Activated CD8-positive, alpha-beta memory T cell treated with anti-CD3 and anti-CD28 coated beads, Interleukin-2, amount 10 ng/mL, durations not matched to agents 7 days and 5 days (primary cell): ENCODE measurements at regions of chr12 and their contacts with region 1.

Region 1: GRCh38 chr12:55738123-55739024 is 4.5 kb upstream of the GDF11 start:
- DNase-seq: peak; percentile 93
- ATAC-seq: peak; percentile 75
- H3K4me3 Mint-ChIP-seq: peak overlapping the region; percentile 80
- H3K27ac Mint-ChIP-seq: peak overlapping the region; percentile 88
- H3K4me1 Mint-ChIP-seq: peaks cover 31% of the 10 kb centered on the region
- H3K27me3 Mint-ChIP-seq: peaks cover 8% of the 10 kb centered on the region

Region 2: DNA sequence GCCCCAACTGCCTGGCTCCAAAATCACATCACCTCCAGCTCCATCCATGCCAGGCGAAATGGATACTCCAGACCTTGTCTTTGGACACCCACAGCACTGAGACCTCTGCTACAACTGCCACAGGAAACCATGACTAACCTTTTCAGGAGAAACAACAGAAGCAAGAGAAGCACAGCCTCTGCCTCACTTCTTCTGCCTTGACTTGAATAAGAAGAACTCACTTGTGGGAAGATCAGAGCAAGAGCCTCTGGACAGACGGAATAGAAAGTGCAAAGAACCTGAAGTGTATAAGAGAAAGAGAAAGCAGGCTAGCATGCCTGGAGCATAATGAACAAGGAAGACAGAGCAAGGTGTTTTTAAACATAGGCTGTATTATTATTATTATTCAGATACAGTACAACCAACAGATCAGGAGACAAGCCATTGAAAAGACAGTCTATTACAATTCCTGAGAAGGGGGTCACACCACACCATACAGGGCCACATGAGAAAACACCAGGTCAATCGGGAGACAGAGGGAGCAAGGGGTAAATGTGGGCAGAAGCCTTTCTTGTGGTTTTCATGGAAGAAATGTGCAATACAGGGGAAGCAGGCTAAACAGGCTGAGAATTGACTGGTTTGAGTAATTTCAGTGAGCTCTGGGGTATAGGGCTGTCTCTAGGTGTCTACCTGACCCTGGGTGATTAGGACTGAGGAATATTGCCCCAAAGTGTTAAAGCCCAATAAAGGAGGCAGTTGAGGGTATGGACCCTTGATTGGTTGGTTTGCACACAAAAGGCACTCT is 109.1 kb before region 1 on chr12:
- CTCF ChIA-PET with region 1: no interaction called
- DNase-seq: no peak
- ATAC-seq: peak; percentile 51
- H3K4me3 Mint-ChIP-seq: no peak overlapping the region
- H3K27ac Mint-ChIP-seq: peak overlapping the region; percentile 0
- H3K4me1 Mint-ChIP-seq: peaks cover 17% of the 10 kb centered on the region
- H3K27me3 Mint-ChIP-seq: peaks cover under 1% of the 10 kb centered on the region

Region 3: DNA sequence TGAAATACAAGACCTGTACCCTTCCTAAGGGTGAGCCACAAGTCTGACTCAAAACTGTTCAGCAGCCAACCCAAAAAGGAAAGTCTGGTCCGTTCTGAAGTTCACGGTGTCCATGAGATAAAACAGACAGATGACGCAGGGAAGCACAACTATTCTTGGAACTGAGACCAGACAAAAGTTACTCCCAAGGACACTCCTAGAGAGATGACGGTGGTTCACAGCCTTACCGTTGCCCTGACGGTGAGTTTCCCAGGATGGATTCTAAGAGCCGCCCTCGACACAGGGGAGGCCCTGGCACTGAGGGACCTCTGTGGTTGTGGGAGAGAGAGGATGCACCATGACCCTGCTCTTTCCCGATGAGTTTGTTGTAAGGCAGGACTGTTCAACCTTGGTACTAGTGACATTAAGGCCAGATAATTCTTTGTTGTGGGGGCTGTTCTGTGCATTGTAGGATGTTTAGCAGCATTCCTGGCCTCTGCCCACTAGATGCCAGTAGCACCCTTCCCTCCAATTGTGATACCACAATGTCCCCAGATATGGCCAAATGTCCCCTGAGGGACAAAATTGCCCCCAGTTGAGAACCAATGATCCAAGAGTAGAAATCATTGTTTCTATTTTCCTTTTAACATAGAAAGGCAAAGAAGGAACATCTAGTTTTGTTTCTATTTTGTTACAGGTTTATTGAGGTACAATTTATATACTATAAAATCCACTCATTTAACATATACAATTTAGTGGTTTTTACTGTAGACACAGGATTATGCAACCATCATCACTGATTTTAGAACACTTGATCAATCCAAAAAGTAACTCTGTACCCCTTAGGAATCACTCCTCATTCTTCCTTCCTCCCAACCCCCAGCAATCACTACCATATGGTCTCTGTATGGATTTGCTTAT is 78.6 kb before region 1 on chr12:
- CTCF ChIA-PET with region 1: interaction called, 16 read pairs
- DNase-seq: no peak
- ATAC-seq: no peak
- H3K4me3 Mint-ChIP-seq: no peak overlapping the region
- H3K27ac Mint-ChIP-seq: no peak overlapping the region
- H3K4me1 Mint-ChIP-seq: no peaks in the 10 kb centered on the region
- H3K27me3 Mint-ChIP-seq: peaks cover 19% of the 10 kb centered on the region

Region 4: GRCh38 chr12:55797068-55797467 is 58.7 kb after region 1 on chr12:
- CTCF ChIA-PET with region 1: interaction called, 25 read pairs
- DNase-seq: no peak
- ATAC-seq: no peak
- H3K4me3 Mint-ChIP-seq: no peak overlapping the region
- H3K27ac Mint-ChIP-seq: no peak overlapping the region
- H3K4me1 Mint-ChIP-seq: peaks cover 19% of the 10 kb centered on the region
- H3K27me3 Mint-ChIP-seq: no peaks in the 10 kb centered on the region

Region 5: DNA sequence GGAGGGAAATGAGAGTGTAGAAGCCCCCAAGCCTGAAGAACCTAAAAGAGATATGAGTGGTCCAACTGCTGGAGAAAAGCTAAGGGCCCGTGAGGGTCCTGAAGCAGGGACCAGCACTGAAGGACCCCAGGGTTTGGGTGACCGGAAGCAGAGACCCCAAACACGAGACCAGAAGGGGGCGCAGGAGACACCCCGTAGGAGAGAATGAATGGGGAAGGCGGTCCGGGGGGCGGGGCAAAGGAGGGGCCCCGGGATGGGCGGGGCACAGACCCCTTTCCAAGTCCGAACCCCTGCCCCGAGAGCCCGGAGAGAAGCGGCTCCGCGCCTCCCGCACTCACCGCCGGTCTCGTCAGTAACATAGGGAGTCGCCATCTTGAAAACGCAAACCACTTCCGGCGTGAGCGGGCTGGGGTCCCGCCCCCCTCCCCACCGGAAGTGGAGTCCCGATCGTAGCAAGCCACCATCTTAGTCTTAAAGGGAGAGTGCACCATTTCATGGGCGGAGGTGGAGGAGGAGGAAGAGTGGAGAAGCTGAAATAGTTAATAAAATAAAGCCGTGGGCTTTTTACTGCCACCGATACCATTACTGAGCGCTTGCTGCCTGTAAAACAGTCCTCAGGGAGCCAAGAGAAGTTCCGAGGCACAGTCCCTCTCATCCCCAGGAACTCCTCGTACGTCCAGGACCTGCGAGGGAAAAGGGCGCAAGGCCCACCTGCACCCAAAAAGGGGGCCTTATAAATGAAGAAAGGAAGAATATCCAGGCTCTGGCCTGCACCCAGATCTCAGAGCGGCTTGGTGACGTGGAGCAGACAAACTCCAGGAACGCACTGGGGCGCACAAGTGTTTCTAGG is 188.6 kb after region 1 on chr12:
- CTCF ChIA-PET with region 1: interaction called, 66 read pairs
- DNase-seq: peak; percentile 97
- ATAC-seq: peak; percentile 48
- H3K4me3 Mint-ChIP-seq: peak overlapping the region; percentile 96
- H3K27ac Mint-ChIP-seq: peak overlapping the region; percentile 98
- H3K4me1 Mint-ChIP-seq: peaks cover 44% of the 10 kb centered on the region
- H3K27me3 Mint-ChIP-seq: no peaks in the 10 kb centered on the region

Region 6: GRCh38 chr12:55996715-55997534 is 258.6 kb after region 1 on chr12 and contains the start of gene SUOX:
- CTCF ChIA-PET with region 1: interaction called, 38 read pairs
- DNase-seq: peak; percentile 71
- ATAC-seq: peak; percentile 75
- H3K4me3 Mint-ChIP-seq: peak within 1 kb of the TSS; percentile 68
- H3K27ac Mint-ChIP-seq: peak within 1 kb of the TSS; percentile 48
- H3K4me1 Mint-ChIP-seq: peaks cover 37% of the 10 kb centered on the region
- H3K27me3 Mint-ChIP-seq: no peaks in the 10 kb centered on the region
- total RNA-seq, gene SUOX: 2.5 to 14.6 TPM